ENCODE measurements at regions of chr5 and their contacts with region 1.

Region 1: GRCh38 chr5:130109152-130109551 is 204.9 kb downstream of the CHSY3 start:
- DNase-seq: peak; percentile 50
- H3K4me3 ChIP-seq: no peak overlapping the region
- H3K27ac ChIP-seq: no peak overlapping the region
- H3K4me1 ChIP-seq: no peaks in the 10 kb centered on the region
- CTCF ChIP-seq: peak; percentile 89

Region 2: GRCh38 chr5:130386155-130386554 is 277.0 kb after region 1 on chr5:
- CTCF ChIA-PET with region 1: no interaction called
- POLR2A ChIA-PET with region 1: no interaction called
- intact Hi-C with region 1: loop called (anchors 10 kb)
- DNase-seq: peak; percentile 7
- H3K4me3 ChIP-seq: no peak overlapping the region
- H3K27ac ChIP-seq: no peak overlapping the region
- H3K4me1 ChIP-seq: no peaks in the 10 kb centered on the region
- CTCF ChIP-seq: peak; percentile 54

Region 3: DNA sequence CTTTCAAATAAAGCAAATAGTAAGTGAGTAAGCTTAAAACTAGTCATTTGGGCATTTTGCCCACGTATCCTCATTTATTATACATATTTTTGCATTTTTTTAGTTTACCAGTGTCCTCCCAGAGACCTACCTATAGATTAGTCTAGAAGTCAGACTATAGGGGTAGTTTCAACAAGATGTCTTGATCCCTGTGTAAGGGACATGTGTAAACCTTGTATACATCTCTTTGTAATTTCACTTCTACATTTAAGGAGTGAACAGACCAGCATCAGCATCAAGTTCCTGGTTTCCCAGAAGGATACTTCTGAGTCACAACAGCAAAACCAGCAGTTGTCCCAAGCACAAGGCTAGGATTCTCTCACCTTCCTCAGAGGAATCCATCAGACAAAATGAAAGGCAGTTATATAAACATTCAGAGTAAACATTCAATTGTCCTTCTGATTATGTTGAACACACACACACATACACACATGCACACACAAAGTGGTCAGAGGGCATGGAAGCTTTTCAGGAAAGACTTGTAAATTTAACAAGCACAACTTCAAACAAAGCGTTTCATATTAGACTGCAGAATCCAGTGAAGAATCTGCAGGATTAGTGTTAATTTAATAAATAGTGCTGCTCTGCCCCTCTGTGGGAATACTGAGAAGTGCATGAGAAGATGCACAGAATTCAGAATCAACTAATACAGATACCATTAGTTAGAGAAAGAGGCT is 1000.5 kb after region 1 on chr5:
- CTCF ChIA-PET with region 1: no interaction called
- POLR2A ChIA-PET with region 1: no interaction called
- intact Hi-C with region 1: loop called (anchors 2 kb)
- DNase-seq: peak; percentile 47
- H3K4me3 ChIP-seq: no peak overlapping the region
- H3K27ac ChIP-seq: no peak overlapping the region
- H3K4me1 ChIP-seq: no peaks in the 10 kb centered on the region
- CTCF ChIP-seq: peak; percentile 90